Calu3 (cell line): ENCODE measurements at regions of chr4 and their contacts with region 1.

Region 1: DNA sequence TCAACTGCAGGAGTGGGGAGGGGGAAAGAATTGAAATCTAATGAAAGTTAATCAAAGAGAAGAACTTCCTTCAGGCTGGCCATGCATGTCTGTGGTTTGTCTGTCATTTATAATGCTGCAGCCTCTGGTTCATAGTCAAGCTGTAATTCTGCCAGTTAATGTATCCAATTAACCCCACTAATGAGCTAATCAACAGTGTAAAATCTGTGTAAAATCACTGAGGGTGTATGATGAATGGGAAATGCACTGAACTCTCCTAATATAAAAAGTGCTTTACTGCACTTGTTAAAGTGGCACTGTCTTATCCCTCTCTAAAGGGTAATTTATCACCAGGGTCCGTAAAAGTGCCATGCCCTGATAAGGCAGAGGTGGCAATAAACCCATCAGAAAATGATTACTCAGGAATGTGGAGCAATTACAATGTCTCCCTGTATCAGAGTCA is 798.1 kb downstream of the PDHA2 start:
- DNase-seq: no peak
- H3K4me3 Mint-ChIP-seq: no peak overlapping the region
- H3K27ac Mint-ChIP-seq: no peak overlapping the region
- H3K4me1 Mint-ChIP-seq: peaks cover 9% of the 10 kb centered on the region
- H3K27me3 Mint-ChIP-seq: no peaks in the 10 kb centered on the region
- CTCF ChIP-seq: no peak

Region 2: DNA sequence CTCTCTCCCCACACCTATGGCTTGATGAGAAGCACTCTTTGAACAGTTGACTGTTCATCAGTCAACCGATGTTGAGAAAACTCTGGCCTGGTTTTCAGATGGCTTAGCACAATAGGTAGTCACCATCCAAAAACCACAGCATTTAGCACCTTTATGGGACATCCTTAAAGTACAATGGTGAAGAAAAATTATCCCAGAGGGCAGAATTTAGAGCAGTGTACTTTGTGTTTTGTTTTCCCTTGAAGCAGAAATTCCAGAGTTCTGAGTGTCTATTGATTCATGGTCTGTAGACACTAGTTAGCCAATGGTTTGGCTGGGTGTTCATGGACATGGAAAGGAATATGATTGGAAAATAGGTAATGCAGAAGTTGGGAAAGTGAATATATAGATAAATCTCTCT is 311.1 kb before region 1 on chr4:
- CTCF ChIA-PET with region 1: no interaction called
- intact Hi-C with region 1: no loop called
- DNase-seq: no peak
- H3K4me3 Mint-ChIP-seq: no peak overlapping the region
- H3K27ac Mint-ChIP-seq: no peak overlapping the region
- H3K4me1 Mint-ChIP-seq: no peaks in the 10 kb centered on the region
- H3K27me3 Mint-ChIP-seq: no peaks in the 10 kb centered on the region
- CTCF ChIP-seq: no peak

Region 3: GRCh38 chr4:96603641-96604040 is 34.4 kb before region 1 on chr4:
- CTCF ChIA-PET with region 1: no interaction called
- intact Hi-C with region 1: loop called (anchors 5 kb)
- DNase-seq: no peak
- H3K4me3 Mint-ChIP-seq: no peak overlapping the region
- H3K27ac Mint-ChIP-seq: no peak overlapping the region
- H3K4me1 Mint-ChIP-seq: no peaks in the 10 kb centered on the region
- H3K27me3 Mint-ChIP-seq: no peaks in the 10 kb centered on the region
- CTCF ChIP-seq: no peak